A549 (cell line): ENCODE measurements at regions of chr3 and their contacts with region 1.

Region 1: DNA sequence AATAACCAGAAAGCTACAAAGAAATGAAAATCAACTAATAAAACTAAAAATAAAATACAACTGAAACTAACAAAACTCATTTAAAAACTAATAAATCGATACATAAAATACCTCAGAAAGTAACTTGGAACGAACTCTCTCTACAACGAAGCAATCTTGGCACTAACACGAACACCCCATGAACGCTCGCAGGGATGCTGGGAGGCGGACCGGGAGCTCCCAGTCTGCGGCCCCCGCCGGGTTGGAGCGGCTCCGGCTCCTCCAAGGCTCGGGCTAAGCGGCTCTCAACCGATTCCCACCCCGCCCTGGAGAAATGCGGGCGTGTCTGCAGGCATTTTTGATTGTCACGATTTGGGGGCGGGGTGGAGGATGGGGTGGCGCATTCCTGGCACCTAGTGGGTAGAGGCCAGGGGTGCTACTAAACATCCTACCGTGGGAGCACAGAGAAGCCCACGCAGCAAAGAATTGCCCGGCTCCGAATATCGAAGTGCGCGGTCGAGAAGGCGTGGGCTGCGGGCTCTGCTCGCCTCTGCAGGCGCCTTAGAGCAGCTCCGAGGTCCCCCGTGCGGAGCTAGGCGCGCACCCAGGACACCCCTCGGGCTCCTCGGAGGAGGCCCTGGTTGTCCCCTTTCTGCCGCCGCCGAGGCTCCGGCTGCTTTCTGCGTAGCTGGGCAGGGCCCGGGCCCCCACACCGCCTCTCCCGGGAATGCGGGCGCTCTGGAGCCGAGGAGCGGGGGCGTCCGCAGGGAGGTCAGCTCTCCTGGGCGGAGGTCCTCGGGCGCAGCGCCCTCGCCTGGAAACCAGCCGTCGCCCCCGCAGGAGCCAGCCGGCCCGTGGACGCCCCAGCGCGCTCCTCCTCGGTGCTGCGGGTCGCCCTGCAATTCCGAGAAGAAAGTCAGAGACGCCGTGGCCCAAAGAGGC is 16.4 kb upstream of the LAMP3 start:
- DNase-seq: peak; percentile 25 to 36
- ATAC-seq: peak; percentile 66 to 89
- H3K4me3 ChIP-seq: peak overlapping the region; percentile 45
- H3K27ac ChIP-seq: peak overlapping the region in 1 of 2 experiments; percentile 46; a peak in 3 of 6 replicates
- H3K4me1 ChIP-seq: peaks cover 3% of the 10 kb centered on the region; the same call in 1 of the 3 replicates
- CTCF ChIP-seq: peak; percentile 21; the same call in 2 of the 3 replicates
- EP300 ChIP-seq: no peak
- POLR2A ChIP-seq: no peak
- RAD21 ChIP-seq: no peak

Region 2: DNA sequence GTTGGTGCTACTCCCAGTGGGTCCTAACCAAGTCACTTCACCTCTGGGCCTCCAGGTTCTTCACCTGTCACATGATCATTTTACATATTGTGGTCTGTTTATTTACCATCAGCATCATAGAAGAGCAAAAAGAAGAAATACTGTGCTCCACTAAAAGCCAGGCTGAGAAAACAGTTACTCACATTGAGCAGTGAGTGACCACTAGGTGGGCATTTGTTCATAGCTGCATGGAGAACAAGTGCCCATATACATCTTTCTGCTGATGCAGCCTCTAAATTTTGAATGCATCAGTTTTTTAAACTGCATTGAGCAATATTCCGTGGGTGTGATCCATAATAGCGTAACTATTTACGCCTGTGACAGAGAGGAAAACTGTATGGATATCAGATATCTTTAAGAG is 274.7 kb before region 1 on chr3:
- CTCF ChIA-PET with region 1: no interaction called
- POLR2A ChIA-PET with region 1: no interaction called
- DNase-seq: no peak
- ATAC-seq: peak; percentile 43 to 50; a peak in 2 of 6 replicates
- H3K4me3 ChIP-seq: no peak overlapping the region
- H3K27ac ChIP-seq: no peak overlapping the region
- H3K4me1 ChIP-seq: no peaks in the 10 kb centered on the region
- CTCF ChIP-seq: no peak
- EP300 ChIP-seq: no peak
- POLR2A ChIP-seq: no peak
- RAD21 ChIP-seq: no peak

Region 3: GRCh38 chr3:183116025-183116614 is 62.8 kb before region 1 on chr3:
- CTCF ChIA-PET with region 1: interaction called, 47 read pairs
- POLR2A ChIA-PET with region 1: no interaction called
- DNase-seq: peak; percentile 48 to 64
- ATAC-seq: peak; percentile 90 to 94
- H3K4me3 ChIP-seq: peak overlapping the region; percentile 55
- H3K27ac ChIP-seq: peak overlapping the region; percentile 40 to 45; a peak in 2 of 6 replicates
- H3K4me1 ChIP-seq: no peaks in the 10 kb centered on the region
- CTCF ChIP-seq: no peak
- EP300 ChIP-seq: no peak
- POLR2A ChIP-seq: no peak
- RAD21 ChIP-seq: no peak

Region 4: GRCh38 chr3:183122257-183122932 is 56.5 kb before region 1 on chr3:
- CTCF ChIA-PET with region 1: interaction called, 47 read pairs
- POLR2A ChIA-PET with region 1: no interaction called
- DNase-seq: peak; percentile 26 to 34
- ATAC-seq: peak; percentile 60 to 62; a peak in 3 of 6 replicates
- H3K4me3 ChIP-seq: no peak overlapping the region
- H3K27ac ChIP-seq: no peak overlapping the region
- H3K4me1 ChIP-seq: peaks cover 4% of the 10 kb centered on the region; the same call in 1 of the 3 replicates
- CTCF ChIP-seq: peak; percentile 84
- EP300 ChIP-seq: no peak
- POLR2A ChIP-seq: no peak
- RAD21 ChIP-seq: peak; percentile 78 to 87

Region 5: DNA sequence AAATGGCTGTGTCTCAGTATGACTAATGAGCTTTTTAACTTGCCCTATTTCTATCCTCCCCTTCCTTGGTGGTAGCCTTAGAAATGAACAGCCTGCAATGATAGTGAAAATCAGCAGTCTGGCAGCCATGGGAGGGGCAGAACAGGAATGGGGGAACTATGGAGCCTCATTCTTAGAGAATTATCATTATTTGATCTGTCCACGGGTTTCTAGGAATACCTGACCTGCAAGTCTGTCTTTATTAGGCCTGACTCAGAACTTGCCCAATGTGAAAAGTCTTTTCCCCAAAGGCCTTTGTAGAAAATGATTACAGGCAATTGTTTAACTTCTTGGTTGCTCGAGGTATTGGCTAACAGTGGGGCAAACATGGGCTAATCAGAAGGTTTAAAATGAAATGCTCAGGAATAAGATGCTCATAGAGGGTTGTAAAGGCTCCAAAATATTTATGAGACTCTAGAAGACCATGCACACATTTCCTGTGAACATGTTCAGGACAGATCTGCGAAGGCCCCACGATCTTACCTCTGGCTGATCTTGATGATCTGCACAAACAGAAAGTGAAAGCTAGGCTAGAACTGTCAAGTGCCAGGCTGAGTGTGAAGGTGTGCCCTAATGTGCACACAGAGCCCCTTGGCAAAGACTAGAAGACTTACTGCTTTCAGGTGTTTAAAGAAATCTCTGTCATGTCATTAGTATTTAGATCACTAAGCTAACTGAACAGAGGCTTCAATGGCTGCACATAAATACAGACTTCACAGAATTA is 23.3 kb after region 1 on chr3:
- CTCF ChIA-PET with region 1: no interaction called
- POLR2A ChIA-PET with region 1: no interaction called
- DNase-seq: no peak
- ATAC-seq: no peak
- H3K4me3 ChIP-seq: no peak overlapping the region
- H3K27ac ChIP-seq: no peak overlapping the region
- H3K4me1 ChIP-seq: no peaks in the 10 kb centered on the region
- CTCF ChIP-seq: no peak
- EP300 ChIP-seq: no peak
- POLR2A ChIP-seq: no peak
- RAD21 ChIP-seq: no peak